ENCODE measurements at regions of chr7 and their contacts with region 1.

Region 1: DNA sequence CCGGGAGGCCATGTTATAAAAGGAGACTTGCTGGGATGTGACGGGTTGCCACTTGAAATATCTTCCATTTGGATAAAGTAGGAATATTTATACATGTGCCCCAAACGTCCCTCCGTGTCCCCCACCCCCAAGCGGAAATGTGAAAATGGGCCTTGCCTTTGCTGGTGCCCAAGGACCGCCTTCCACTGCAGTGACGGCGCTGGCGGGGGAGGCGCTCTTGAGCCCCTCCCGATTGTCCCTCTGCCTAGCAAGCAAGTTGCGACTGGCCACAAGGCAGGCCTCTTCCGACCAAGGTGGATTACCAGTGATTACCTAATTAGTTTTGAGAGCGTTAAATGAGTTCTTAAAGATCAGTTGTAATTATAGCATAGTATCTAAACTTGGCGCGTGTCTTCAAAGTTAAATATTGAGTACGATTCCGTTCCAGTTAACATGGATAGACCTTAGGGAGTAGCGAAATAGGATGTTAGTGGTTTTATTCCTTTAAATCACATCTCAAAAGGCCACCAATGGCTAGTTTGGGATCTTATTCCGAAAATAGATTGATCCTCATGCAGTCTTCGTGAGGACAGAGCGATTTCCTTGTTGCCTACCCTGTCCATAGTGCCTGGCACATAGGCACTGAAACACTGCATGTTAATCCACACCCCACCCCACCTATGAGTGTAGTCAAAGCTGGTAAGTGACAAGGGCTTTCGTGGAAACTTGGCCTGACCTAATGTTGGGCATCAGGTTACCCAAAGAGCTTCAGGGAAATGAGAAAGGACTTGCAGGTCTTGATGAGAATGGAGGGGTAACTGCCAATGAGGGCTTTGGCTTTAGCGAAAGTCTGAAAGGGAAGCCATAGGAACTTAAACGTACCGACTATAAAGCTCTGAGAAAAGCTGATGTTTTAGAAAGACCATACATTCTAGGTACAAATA is 1.1 kb downstream of the PPIA start:
- DNase-seq: peak; percentile 65 to 94 (median 73)
- ATAC-seq: peak; percentile 82
- H3K4me3 ChIP-seq: peak overlapping the region; percentile 56
- H3K27ac ChIP-seq: peak overlapping the region; percentile 98
- H3K4me1 ChIP-seq: peaks cover 12 to 25% of the 10 kb centered on the region in 2 experiments; a peak in 4 of 5 replicates
- H3K27me3 ChIP-seq: no peaks in the 10 kb centered on the region
- CTCF ChIP-seq: peak; percentile 62 to 76 (median 67)
- EP300 ChIP-seq: no peak
- POLR2A ChIP-seq: no peak; the same call in 1 of the 2 replicates
- RAD21 ChIP-seq: peak; percentile 34 to 45; a peak in 3 of 4 replicates

Region 2: DNA sequence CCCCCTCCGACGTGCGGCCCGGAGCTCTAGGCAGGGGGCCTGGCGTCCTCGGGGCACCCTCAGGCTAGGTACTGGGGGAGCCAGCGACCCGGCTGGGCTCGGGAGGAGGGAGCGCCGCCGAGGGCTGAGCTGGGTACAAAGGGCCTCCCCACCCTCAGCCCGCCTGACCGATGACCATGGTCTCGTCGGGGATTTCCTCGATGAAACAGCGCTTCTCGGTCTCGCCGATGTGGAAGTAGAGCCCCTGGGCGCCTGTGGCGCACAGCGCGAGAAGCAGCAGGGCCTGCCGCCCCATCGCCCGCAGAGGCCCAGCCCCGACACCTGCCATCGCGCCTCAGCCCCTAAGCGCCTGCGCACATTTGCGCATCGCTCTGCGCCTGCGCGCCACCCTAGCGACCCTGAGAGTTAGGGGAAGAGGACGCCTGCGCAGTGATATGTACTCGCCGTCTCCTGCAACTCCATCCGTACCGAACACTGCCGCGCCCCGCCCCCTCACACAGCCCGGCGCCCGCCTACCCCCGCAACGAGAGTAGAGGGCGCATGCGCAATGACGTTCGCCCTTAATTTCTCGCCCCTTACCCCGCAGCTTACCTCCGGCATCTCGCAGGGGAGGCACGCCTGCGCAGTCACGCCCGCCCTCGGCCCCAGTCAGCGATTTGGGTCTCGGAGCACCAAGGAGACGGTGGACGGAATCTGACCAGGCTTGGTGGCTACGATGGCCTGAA is 215.5 kb before region 1 on chr7 and contains the start of gene TMED4:
- CTCF ChIA-PET with region 1: no interaction called
- POLR2A ChIA-PET with region 1: interaction called, 14 read pairs
- in situ Hi-C with region 1: no loop called
- intact Hi-C with region 1: loop called (anchors 5 kb)
- DNase-seq: peak; percentile 99 to 100 (median 99)
- ATAC-seq: peak; percentile 95
- H3K4me3 ChIP-seq: peak within 1 kb of the TSS; percentile 81
- H3K27ac ChIP-seq: peak within 1 kb of the TSS; percentile 92
- H3K4me1 ChIP-seq: peaks cover 9 to 25% of the 10 kb centered on the region in 2 experiments; a peak in 4 of 5 replicates
- H3K27me3 ChIP-seq: no peaks in the 10 kb centered on the region
- CTCF ChIP-seq: no peak
- EP300 ChIP-seq: no peak
- POLR2A ChIP-seq: peak; percentile 90
- RAD21 ChIP-seq: no peak
- polyA plus RNA-seq, gene TMED4: 20.3 to 23.1 TPM

Region 3: GRCh38 chr7:44748045-44748947 is 49.3 kb before region 1 on chr7 and contains the start of gene ZMIZ2:
- CTCF ChIA-PET with region 1: no interaction called
- POLR2A ChIA-PET with region 1: interaction called, 3 read pairs
- in situ Hi-C with region 1: no loop called
- intact Hi-C with region 1: loop called (anchors 5 kb)
- DNase-seq: peak; percentile 90 to 98 (median 98)
- ATAC-seq: peak; percentile 90
- H3K4me3 ChIP-seq: peak within 1 kb of the TSS; percentile 76
- H3K27ac ChIP-seq: peak within 1 kb of the TSS; percentile 96
- H3K4me1 ChIP-seq: peaks cover 26 to 33% of the 10 kb centered on the region in 2 experiments; a peak in 4 of 5 replicates
- H3K27me3 ChIP-seq: no peaks in the 10 kb centered on the region
- CTCF ChIP-seq: no peak
- EP300 ChIP-seq: no peak; the same call in 1 of the 2 replicates
- POLR2A ChIP-seq: peak; percentile 66
- RAD21 ChIP-seq: no peak
- polyA plus RNA-seq, gene ZMIZ2: 0.13 to 0.18 TPM

Region 4: DNA sequence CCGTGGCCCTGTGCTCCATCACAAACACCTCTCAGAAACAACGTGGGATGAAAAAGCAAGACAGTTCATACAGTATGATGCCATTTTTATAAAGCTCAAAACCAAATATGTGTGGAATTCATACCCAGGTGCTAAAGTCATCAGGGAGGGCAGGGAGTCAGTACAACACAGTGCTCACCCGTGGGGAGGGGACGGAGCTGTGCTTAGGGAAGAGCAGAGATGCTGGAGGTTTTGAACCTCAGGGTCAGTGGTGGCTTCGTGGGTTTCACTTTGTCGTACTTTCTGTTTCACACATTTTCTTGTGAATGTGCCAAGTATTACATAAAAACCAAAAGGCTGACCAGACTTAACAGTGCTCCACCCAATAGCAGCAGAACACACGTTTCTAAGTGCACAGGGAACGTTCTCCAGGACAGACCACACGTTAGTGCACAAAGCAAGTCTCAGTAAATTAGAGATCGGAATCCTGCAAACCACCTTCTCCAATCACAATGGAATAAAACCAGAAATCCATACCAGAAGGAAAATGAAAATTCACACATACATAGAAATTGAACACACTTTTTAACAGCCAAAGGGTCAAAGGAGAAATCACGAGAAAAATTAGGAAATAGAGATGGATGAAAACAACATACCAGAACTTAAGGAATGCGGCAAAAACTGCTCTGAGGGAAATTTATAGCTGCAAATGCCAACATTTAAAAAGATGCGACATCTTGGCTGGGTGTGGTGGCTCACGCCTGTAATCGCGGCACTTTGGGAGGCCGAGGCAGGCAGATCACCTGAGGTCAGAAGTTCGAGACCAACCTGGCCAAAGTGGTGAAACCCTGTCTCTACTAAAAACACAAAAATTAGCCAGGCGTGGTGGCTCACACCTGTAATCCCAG is 27.6 kb before region 1 on chr7:
- CTCF ChIA-PET with region 1: no interaction called
- POLR2A ChIA-PET with region 1: interaction called, 14 read pairs
- in situ Hi-C with region 1: no loop called
- intact Hi-C with region 1: no loop called
- DNase-seq: no peak
- ATAC-seq: no peak
- H3K4me3 ChIP-seq: no peak overlapping the region
- H3K27ac ChIP-seq: no peak overlapping the region
- H3K4me1 ChIP-seq: peaks cover 14 to 33% of the 10 kb centered on the region in 2 experiments
- H3K27me3 ChIP-seq: no peaks in the 10 kb centered on the region
- CTCF ChIP-seq: no peak
- EP300 ChIP-seq: no peak
- POLR2A ChIP-seq: no peak
- RAD21 ChIP-seq: no peak

Region 5: GRCh38 chr7:44906965-44907364 is 109.4 kb after region 1 on chr7:
- CTCF ChIA-PET with region 1: no interaction called
- POLR2A ChIA-PET with region 1: no interaction called
- in situ Hi-C with region 1: no loop called
- intact Hi-C with region 1: no loop called
- DNase-seq: no peak
- ATAC-seq: no peak
- H3K4me3 ChIP-seq: no peak overlapping the region
- H3K27ac ChIP-seq: no peak overlapping the region
- H3K4me1 ChIP-seq: peaks cover 0 to 3% of the 10 kb centered on the region in 2 experiments; a peak in 2 of 5 replicates
- H3K27me3 ChIP-seq: peaks cover 0 to 11% of the 10 kb centered on the region in 2 experiments; a peak in 2 of 5 replicates
- CTCF ChIP-seq: no peak
- EP300 ChIP-seq: no peak
- POLR2A ChIP-seq: no peak
- RAD21 ChIP-seq: no peak

Measured in K562 (cell line).